Posterior cingulate gyrus (tissue), 11 donors: ENCODE measurements at regions of chr2 and their contacts with region 1.

Region 1: GRCh38 chr2:232327105-232328041 is 51.2 kb upstream of the ALPP start:
- DNase-seq: peak in 9 of 10 donors; percentile 61 to 97 (median 81)

Region 2: DNA sequence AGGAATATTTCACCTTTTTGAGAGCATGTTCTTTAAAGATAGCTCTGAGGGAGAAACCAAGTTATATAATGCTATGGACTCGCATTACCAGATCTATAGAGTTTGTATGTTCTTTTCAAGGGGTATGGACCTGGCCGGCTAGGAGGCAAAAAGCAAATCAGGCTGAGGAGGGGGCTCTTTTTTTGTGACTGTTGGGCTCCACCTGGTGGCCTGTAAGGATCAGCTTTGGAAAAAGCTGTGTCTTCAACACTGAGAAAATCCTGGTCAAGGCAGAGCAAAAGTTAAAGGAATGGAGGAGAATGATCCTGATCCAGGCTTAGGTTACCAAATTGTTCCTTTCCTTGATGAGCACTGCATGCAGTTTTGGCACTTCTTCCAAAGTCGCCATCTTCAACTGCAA is 185.3 kb before region 1 on chr2:
- intact Hi-C with region 1: loop called (anchors 5 kb)
- DNase-seq: peak in 5 of 10 donors; percentile 28 to 85 (median 49)

Region 3: GRCh38 chr2:232721882-232722281 is 394.5 kb after region 1 on chr2:
- intact Hi-C with region 1: no loop called
- DNase-seq: no peak